Esophagus muscularis mucosa (tissue), 4 donors: ENCODE measurements at regions of chr22 and their contacts with region 1.

Region 1: GRCh38 chr22:36144886-36145541 is 15.5 kb downstream of the APOL3 start:
- DNase-seq: no peak
- H3K4me3 ChIP-seq: no peak overlapping the region
- H3K27ac ChIP-seq: peak overlapping the region in 3 of 4 donors; percentile 13 to 58 (median 57)
- H3K4me1 ChIP-seq: peaks cover 24 to 40% (median 32%) of the 10 kb centered on the region in 4 donors
- H3K27me3 ChIP-seq: no peaks in the 10 kb centered on the region
- CTCF ChIP-seq: peak; percentile 68 to 83 (median 79)
- EP300 ChIP-seq: no peak
- POLR2A ChIP-seq: no peak

Region 2: GRCh38 chr22:36088292-36088691 is 56.7 kb before region 1 on chr22:
- intact Hi-C with region 1: no loop called
- DNase-seq: no peak
- H3K4me3 ChIP-seq: no peak overlapping the region
- H3K27ac ChIP-seq: no peak overlapping the region
- H3K4me1 ChIP-seq: no peaks in the 10 kb centered on the region
- H3K27me3 ChIP-seq: no peaks in the 10 kb centered on the region
- CTCF ChIP-seq: no peak
- EP300 ChIP-seq: no peak
- POLR2A ChIP-seq: no peak

Region 3: GRCh38 chr22:36182056-36182455 is 37.0 kb after region 1 on chr22:
- intact Hi-C with region 1: loop called (anchors 2 kb)
- DNase-seq: no peak
- H3K4me3 ChIP-seq: no peak overlapping the region
- H3K27ac ChIP-seq: no peak overlapping the region
- H3K4me1 ChIP-seq: peaks cover 0 to 14% (median 7%) of the 10 kb centered on the region in 4 donors
- H3K27me3 ChIP-seq: no peaks in the 10 kb centered on the region
- CTCF ChIP-seq: no peak
- EP300 ChIP-seq: no peak
- POLR2A ChIP-seq: no peak

Region 4: DNA sequence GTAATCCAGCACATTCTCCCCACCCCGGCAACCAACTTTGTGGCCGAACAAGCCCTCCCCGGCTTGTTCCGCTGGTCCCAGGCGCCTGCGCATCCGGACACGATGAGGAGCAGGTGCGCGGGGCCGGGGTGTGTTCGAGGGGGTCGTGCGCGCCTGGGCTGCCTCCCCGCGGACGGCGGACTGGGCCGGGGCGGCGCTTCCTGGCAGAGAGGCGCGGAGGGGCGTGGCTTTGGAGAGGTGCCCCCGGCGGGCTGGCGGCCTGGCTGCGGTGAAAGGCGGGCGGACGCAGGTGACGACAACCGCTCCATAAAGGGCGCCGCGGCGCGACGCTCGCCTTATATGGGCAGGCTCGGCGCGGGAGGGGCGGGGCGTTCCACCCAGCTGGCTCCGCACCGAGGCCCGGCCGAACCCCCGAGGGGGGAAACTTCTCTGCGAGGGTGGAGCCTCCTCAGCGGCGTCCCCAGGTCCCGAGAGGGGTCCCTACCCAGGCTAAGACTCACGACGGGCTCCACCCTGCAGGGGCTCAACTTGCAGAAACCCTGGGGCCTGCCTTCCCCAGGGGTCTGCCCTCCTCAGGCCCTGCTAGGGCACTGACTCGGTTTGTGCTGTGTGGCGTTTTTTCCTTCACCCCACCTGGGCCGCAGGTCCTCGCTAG is 310.0 kb after region 1 on chr22:
- intact Hi-C with region 1: no loop called
- DNase-seq: peak; percentile 97
- H3K4me3 ChIP-seq: peak overlapping the region; percentile 46 to 73 (median 58)
- H3K27ac ChIP-seq: peak overlapping the region; percentile 84 to 97 (median 92)
- H3K4me1 ChIP-seq: peaks cover 59 to 79% (median 75%) of the 10 kb centered on the region in 4 donors
- H3K27me3 ChIP-seq: no peaks in the 10 kb centered on the region
- CTCF ChIP-seq: peak in 2 of 3 experiments; percentile 12 to 21
- EP300 ChIP-seq: peak; percentile 54
- POLR2A ChIP-seq: peak; percentile 83

Region 5: DNA sequence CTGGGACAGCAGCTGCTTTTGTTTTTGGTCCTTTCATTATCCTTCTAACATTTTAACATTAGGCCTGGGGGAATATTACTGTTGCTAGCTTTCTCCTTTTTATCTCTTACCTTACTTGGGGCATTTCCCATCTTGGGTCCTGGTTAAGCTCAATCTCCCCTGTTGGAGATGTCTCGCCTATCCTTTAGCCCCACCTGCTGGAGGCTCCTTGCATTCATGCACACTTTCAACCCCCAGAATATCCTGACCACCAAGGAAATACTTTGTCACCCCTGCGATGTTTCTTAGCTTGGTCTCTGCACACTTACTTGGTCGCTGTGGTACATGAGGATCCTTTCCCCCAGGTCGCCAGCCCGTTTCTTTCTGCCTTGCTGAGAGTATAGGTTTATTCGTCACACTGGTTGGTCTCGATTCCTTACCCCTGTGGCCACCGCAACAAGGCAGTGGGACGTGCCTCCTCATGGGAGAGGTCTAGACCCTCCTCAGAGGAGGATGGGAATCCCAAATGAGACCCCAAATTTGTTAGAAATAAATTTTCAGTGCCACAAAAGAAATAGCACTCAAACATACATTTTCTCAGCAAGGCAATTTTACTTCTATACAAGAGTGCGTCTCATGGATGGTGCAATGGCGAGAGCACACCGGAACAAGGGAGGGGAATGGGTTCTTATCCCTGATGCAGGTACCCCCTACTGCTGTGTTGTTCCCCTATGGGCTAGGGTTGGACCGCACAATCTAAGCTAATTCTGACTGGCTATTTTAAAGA is 341.8 kb after region 1 on chr22:
- intact Hi-C with region 1: loop called (anchors 5 kb)
- DNase-seq: no peak
- H3K4me3 ChIP-seq: no peak overlapping the region
- H3K27ac ChIP-seq: no peak overlapping the region
- H3K4me1 ChIP-seq: peaks cover 5 to 7% (median 6%) of the 10 kb centered on the region in 4 donors
- H3K27me3 ChIP-seq: no peaks in the 10 kb centered on the region
- CTCF ChIP-seq: peak; percentile 72 to 83 (median 81)
- EP300 ChIP-seq: no peak
- POLR2A ChIP-seq: no peak